Activated naive CD4-positive, alpha-beta T cell treated with anti-CD3 and anti-CD28 coated beads, Interleukin-2, amount 10 ng/mL, durations not matched to agents 7 days and 5 days (primary cell): ENCODE measurements at regions of chr6 and their contacts with region 1.

Region 1: DNA sequence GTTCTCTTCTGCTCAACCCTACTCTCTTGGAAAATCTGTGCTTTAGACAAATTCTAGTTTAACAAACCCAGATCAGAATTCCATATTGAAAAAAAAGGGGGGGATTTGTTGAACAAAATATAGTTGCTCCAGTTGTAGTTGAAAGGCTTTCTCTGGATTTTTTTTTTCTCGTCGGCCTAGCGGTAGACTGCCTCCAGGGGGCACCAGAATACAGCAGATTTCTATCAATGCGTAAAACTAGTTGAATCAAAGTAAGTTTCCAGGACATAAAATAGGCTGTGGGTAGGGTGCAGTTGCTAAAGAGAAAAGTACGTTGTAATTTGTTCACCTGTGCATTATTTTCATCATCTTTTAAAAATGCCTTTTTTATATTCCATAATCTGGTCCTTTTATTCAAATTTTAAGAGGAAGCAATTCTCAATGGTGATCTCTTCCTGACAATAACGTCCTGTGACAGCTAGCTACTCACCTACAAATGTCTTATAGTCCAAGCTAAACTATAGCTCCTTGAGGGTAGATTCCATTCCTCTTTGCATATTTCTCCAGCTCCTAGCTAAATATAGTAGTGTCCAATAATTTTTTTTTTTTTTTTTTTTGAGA is 105.4 kb downstream of the PERP start:
- DNase-seq: peak; percentile 76
- H3K4me3 Mint-ChIP-seq: no peak overlapping the region
- H3K27ac Mint-ChIP-seq: no peak overlapping the region
- H3K4me1 Mint-ChIP-seq: peaks cover 23% of the 10 kb centered on the region
- H3K27me3 Mint-ChIP-seq: peaks cover 13% of the 10 kb centered on the region

Region 2: DNA sequence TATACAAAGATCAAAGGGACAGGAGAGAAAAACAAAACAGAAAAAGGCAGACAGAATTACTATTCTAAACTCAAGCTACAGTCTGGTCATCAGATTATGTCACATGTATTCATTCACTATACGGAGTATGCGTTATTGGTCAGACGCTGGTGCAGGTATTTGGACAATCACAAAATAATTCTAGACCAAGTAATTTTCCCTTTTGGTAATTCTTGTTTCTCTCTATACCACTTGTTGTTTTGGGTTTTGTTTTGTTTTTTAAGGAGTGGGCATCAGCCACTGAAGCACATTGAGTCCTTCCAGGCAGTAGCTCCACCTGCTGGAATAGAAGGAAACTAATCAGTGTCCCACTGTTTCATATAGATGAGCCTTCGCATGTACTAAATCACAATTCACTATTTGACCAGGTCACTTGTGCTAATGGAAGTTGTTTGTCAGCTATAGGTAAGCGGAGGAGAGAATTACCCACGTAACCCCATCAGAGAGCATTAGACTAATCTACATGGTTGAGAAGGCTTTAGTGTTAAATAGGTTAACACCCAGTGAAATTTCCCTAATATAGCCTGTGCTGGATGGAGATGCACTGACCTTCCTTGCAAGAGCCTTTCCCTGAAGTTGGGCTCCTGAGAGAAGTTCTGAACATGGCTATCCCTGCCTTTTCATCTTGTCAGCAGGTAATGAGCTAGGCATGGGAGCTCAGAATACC is 56.9 kb before region 1 on chr6:
- CTCF ChIA-PET with region 1: interaction called, 17 read pairs
- DNase-seq: peak; percentile 42
- H3K4me3 Mint-ChIP-seq: no peak overlapping the region
- H3K27ac Mint-ChIP-seq: no peak overlapping the region
- H3K4me1 Mint-ChIP-seq: peaks cover 23% of the 10 kb centered on the region
- H3K27me3 Mint-ChIP-seq: no peaks in the 10 kb centered on the region

Region 3: GRCh38 chr6:137989664-137990063 is 12.2 kb before region 1 on chr6:
- CTCF ChIA-PET with region 1: interaction called, 12 read pairs
- DNase-seq: no peak
- H3K4me3 Mint-ChIP-seq: no peak overlapping the region
- H3K27ac Mint-ChIP-seq: no peak overlapping the region
- H3K4me1 Mint-ChIP-seq: no peaks in the 10 kb centered on the region
- H3K27me3 Mint-ChIP-seq: peaks cover 33% of the 10 kb centered on the region

Region 4: DNA sequence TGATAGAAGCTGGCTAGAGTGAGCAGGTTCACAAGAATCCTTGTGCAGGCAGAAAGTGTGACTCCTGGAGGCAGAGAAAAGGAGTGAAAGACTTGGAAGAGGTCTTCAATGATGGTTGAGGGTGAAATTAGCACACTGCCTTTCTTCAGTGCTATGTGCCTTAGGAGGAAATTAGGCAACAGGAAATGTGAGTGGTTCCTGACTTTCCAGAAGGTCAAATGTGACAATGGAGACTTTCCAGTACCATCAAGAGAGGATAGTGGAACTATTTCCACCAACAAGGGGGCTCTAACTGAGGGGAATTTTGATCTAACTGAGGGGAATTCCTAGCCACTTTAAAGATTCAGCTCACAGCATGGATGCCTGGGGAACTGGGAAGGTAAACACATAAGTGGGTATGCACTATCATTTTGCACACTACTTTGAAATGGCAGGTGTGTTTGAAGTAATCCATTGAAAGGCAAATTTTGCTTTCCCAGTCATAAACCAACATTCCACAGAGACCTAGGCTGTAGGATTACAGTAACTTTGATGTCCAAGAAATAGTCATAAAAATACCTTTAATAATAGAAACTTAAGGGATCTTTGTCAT is 15.4 kb after region 1 on chr6:
- CTCF ChIA-PET with region 1: interaction called, 21 read pairs
- DNase-seq: no peak
- H3K4me3 Mint-ChIP-seq: no peak overlapping the region
- H3K27ac Mint-ChIP-seq: no peak overlapping the region
- H3K4me1 Mint-ChIP-seq: no peaks in the 10 kb centered on the region
- H3K27me3 Mint-ChIP-seq: peaks cover 5% of the 10 kb centered on the region

Region 5: DNA sequence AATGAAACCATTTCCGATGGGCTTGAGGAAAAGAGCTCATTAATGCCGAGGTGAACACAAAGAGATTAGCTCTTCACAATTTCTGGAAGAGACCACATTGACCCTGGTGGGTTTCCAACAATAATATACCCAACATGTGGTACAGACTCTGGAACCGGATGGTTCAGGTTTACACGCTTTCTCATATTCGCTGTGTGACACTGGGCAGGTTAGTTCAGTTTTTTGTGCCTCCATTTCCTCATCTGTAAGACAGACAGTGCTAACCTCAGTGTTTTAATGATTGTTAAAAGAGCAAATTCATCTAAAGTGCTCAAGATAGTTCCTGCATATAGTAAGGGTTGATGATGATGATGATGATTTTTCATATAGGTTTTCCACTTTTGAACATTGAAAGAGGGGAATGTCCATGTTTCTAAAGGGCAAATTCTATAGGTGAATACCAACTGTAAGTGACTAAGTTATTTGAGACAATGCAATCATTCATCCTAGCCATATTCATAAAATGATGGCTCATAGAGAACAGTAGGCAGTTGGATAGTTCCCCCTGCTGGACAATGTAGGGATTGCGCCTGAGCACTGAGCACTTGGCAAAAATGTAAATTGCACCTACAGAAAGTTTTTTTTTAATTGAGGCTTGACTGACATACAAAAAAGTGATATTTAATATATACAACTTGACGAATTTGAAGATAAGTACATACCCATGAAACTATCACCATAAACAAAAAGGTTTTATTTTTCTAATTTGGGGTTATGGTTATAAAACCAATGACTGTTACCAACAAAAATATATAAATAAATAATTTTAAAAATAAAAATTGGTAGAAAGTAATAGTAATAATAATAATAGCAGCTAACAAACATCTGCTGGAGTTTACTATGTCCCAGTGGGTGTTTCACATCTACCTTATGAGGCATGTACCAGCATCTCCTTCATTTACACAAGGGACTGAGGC is 107.5 kb after region 1 on chr6:
- CTCF ChIA-PET with region 1: interaction called, 69 read pairs
- DNase-seq: peak; percentile 87
- H3K4me3 Mint-ChIP-seq: no peak overlapping the region
- H3K27ac Mint-ChIP-seq: no peak overlapping the region
- H3K4me1 Mint-ChIP-seq: peaks cover 36% of the 10 kb centered on the region
- H3K27me3 Mint-ChIP-seq: peaks cover 46% of the 10 kb centered on the region

Region 6: DNA sequence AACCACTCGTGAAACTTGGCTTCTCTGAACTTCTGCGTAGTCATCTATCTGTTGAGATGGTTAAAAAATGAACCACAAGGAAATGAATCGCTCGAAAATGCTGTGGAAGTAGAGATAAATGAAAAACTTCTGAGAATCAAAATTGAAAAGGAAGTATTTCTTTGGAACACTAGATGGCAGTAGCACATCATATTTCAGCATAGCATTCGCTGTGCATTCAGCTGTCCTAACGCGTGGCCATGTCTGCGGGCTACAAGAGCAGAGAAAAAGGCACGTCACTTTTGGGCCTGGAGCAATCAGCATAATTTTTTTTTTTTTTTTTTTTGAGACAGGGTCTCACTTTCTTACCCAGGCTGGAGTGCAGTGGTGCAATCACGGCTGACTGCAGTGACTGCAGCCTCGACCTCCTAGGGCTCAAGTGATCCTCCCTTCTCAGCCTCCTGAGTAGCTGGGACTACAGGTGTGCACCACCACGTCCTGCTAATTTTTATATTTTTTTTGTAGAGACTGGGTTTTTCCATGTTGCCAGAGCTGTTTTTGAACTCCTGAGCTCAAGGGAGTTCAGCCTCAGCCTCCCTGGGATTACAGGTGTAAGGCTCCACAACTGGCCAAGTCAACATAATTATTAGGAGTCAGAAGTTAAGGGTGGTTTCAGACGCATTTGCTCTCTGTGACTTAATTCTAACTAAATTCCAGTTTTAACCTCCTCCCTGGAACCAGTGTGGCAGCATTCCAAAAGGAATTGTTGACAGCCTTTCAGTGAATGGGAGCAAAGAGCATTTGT is 114.2 kb after region 1 on chr6:
- CTCF ChIA-PET with region 1: interaction called, 38 read pairs
- DNase-seq: peak; percentile 57
- H3K4me3 Mint-ChIP-seq: no peak overlapping the region
- H3K27ac Mint-ChIP-seq: no peak overlapping the region
- H3K4me1 Mint-ChIP-seq: peaks cover 11% of the 10 kb centered on the region
- H3K27me3 Mint-ChIP-seq: peaks cover 32% of the 10 kb centered on the region

Region 7: GRCh38 chr6:138231381-138231897 is 229.6 kb after region 1 on chr6:
- CTCF ChIA-PET with region 1: no interaction called
- DNase-seq: no peak
- H3K4me3 Mint-ChIP-seq: no peak overlapping the region
- H3K27ac Mint-ChIP-seq: no peak overlapping the region
- H3K4me1 Mint-ChIP-seq: no peaks in the 10 kb centered on the region
- H3K27me3 Mint-ChIP-seq: peaks cover 8% of the 10 kb centered on the region